PC-3 (cell line): ENCODE measurements at regions of chr18 and their contacts with region 1.

Region 1: DNA sequence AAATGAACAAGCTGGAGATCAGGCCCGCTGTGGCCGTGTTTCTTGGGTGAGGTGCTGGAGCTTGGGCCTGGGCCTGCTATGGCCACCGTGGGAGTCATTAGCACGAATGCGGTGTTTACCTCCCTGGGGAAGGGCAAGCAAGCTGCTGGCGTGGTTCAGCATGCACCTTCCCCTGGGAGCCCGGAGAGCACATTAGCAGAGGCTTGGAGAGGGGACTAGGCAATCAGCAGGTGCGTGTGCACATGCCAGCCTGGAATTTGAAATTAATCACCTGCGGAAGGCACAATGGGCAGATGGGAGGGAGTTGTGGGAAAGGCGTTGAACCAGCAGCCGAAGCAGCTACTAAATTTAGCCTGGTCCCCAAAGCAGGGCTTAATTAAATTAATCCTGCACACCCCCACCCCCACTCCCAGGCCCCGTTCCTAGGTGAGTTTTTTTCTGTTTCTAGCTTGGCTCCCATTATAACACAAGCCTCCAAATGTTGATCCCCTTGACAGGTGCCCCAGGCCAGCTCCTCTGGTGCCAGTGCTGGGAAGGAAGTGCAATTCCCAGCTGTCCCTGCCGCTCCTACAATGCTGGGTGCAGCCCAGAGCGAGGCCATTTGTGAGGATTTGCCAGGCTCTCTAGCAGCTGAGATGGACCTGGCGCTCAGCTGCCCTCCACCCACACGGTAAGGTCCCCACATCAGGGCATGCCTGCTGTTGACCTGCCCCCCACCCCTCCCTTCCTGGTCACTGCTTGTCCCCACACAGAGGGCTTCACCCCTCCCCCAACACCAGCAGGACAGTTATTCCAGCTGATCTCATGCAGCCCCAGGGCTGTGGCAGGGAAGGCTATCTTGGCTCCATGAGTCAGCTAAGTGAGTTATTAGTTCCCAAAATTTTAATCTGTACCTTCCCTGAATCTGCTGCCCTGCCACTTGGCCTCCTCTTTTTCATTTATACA is 115.0 kb downstream of the ZBTB7C start:
- DNase-seq: peak; percentile 13
- ATAC-seq: peak; percentile 19
- H3K4me3 ChIP-seq: no peak overlapping the region
- H3K27ac ChIP-seq: peak overlapping the region; percentile 47
- H3K4me1 ChIP-seq: peaks cover 23% of the 10 kb centered on the region
- H3K27me3 ChIP-seq: no peaks in the 10 kb centered on the region
- CTCF ChIP-seq: no peak

Region 2: DNA sequence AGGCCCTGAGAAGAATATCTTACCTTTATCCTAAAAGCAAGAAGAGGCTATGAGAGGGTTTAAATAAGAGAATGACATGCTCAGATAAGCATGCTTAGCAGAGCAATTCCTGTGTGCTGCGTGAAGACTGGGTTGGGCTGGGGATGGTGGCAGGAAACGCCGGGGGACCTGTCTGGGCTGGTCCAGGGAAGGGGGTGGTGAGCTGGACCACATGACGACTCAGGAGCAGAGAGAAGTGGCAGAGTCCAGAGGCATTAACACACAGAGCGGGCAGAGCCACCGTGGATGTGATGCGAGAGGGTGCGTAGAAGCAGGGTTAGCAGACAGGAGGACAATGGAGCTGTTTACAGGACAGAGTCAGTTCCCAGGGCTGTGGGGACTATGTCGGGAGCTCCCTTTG is 30.4 kb after region 1 on chr18:
- CTCF ChIA-PET with region 1: no interaction called
- POLR2A ChIA-PET with region 1: interaction called, 10 read pairs
- intact Hi-C with region 1: no loop called
- DNase-seq: no peak
- ATAC-seq: no peak
- H3K4me3 ChIP-seq: no peak overlapping the region
- H3K27ac ChIP-seq: no peak overlapping the region
- H3K4me1 ChIP-seq: peaks cover under 1% of the 10 kb centered on the region; the same call in 1 of the 2 replicates
- H3K27me3 ChIP-seq: no peaks in the 10 kb centered on the region
- CTCF ChIP-seq: no peak